Breast epithelium (tissue), 4 donors: ENCODE measurements at regions of chr2 and their contacts with region 1.

Region 1: DNA sequence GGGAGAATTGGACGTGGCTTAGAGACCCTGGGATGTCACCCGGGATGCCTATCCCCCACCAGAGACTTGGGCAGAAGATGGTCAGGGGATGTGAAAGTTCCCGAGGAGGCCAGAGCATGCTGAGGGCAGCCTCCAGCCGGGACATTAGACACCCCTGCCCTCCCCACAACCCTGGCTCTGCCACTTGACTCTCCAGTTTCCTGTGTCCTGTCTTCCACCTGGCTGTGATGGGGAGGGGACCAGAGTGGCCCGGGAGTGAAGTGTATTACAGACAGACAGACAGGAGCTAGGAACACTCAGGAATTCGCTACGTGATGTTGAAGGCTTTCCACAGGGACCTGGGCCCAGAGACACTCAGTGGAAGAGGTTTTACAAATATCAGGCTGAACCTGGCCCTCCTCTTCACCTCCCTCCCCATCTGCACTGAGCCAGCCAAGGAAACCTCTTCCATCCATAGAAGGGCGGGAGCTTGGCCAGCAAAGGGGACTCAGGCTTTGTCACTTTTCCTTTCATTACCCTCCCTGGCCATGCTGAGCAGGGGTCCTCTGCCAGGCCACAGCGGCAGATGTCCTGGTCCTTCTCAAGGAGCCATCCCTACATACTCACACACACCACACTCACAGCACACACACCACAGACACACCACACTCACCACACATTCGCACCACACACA is 60.7 kb downstream of the SDC1 start:
- DNase-seq: no peak
- H3K4me3 ChIP-seq: no peak overlapping the region
- H3K27ac ChIP-seq: no peak overlapping the region
- H3K4me1 ChIP-seq: no peaks in the 10 kb centered on the region
- H3K27me3 ChIP-seq: no peaks in the 10 kb centered on the region
- CTCF ChIP-seq: no peak
- POLR2A ChIP-seq: no peak

Region 2: GRCh38 chr2:19519045-19519444 is 645.2 kb before region 1 on chr2:
- intact Hi-C with region 1: loop called (anchors 5 kb)
- DNase-seq: no peak
- H3K4me3 ChIP-seq: no peak overlapping the region
- H3K27ac ChIP-seq: no peak overlapping the region
- H3K4me1 ChIP-seq: no peaks in the 10 kb centered on the region
- H3K27me3 ChIP-seq: no peaks in the 10 kb centered on the region
- CTCF ChIP-seq: no peak
- POLR2A ChIP-seq: no peak

Region 3: DNA sequence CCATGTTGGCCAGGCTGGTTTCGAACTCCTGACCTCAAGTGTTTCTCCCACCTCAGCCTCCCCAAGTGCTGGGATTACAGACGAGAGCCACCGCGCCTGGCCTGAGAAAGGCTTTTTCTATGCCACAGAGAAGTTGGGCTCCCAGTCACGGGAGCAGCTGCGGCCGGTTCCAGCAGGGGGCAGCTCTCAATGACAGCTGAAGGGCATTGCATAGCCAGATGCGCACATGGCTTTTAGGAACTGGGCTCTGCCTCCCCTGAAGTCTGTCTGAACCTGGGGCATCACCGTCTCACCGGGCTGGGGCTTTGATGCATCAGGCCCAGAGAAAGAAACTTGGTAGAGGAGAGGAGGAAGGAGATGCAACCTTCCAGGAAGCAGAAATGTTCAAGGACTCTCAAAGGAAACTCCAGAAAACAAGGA is 28.6 kb before region 1 on chr2:
- intact Hi-C with region 1: no loop called
- DNase-seq: peak; percentile 66 to 67
- H3K4me3 ChIP-seq: no peak overlapping the region
- H3K27ac ChIP-seq: no peak overlapping the region
- H3K4me1 ChIP-seq: no peaks in the 10 kb centered on the region
- H3K27me3 ChIP-seq: no peaks in the 10 kb centered on the region
- CTCF ChIP-seq: peak; percentile 55 to 83 (median 83)
- POLR2A ChIP-seq: no peak